Activated CD4-positive, alpha-beta T cell treated with anti-CD3 and anti-CD28 coated beads, Interleukin-2, amount 10 ng/mL, durations not matched to agents 24 days and 14 days (primary cell): ENCODE measurements at regions of chr2 and their contacts with region 1.

Region 1: GRCh38 chr2:246489-247144 is 17.2 kb downstream of the SH3YL1 start:
- DNase-seq: peak; percentile 80
- H3K4me3 Mint-ChIP-seq: no peak overlapping the region
- H3K27ac Mint-ChIP-seq: no peak overlapping the region
- H3K4me1 Mint-ChIP-seq: peaks cover 3% of the 10 kb centered on the region
- H3K27me3 Mint-ChIP-seq: no peaks in the 10 kb centered on the region

Region 2: GRCh38 chr2:264660-265468 is 18.2 kb after region 1 on chr2 and contains the start of gene ACP1:
- intact Hi-C with region 1: loop called (anchors 2 kb)
- DNase-seq: peak; percentile 99
- H3K4me3 Mint-ChIP-seq: peak within 1 kb of the TSS; percentile 97
- H3K27ac Mint-ChIP-seq: peak within 1 kb of the TSS; percentile 97
- H3K4me1 Mint-ChIP-seq: peaks cover 40% of the 10 kb centered on the region
- H3K27me3 Mint-ChIP-seq: no peaks in the 10 kb centered on the region
- total RNA-seq, gene ACP1: 124 and 127 TPM in 2 replicates

Region 3: DNA sequence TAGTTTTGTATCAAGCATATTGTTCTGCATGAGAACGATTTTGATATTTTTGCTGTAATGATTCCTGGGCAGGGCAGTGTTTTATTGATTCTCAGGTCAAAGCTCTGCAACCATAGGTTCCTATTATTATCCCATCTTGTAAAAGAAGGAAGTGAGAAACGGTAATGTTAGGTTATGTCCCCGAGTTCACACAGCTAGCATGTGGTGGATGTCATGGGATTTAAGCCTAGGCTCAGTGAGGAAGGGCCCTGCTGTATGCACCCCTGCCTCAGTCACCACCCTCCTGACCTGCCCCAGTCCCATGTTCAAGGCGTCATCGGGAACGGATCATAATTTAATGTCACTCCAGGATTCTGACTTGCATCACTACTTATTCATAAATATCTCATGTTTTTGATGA is 28.8 kb after region 1 on chr2:
- intact Hi-C with region 1: no loop called
- DNase-seq: no peak
- H3K4me3 Mint-ChIP-seq: no peak overlapping the region
- H3K27ac Mint-ChIP-seq: no peak overlapping the region
- H3K4me1 Mint-ChIP-seq: peaks cover 9% of the 10 kb centered on the region
- H3K27me3 Mint-ChIP-seq: no peaks in the 10 kb centered on the region

Region 4: DNA sequence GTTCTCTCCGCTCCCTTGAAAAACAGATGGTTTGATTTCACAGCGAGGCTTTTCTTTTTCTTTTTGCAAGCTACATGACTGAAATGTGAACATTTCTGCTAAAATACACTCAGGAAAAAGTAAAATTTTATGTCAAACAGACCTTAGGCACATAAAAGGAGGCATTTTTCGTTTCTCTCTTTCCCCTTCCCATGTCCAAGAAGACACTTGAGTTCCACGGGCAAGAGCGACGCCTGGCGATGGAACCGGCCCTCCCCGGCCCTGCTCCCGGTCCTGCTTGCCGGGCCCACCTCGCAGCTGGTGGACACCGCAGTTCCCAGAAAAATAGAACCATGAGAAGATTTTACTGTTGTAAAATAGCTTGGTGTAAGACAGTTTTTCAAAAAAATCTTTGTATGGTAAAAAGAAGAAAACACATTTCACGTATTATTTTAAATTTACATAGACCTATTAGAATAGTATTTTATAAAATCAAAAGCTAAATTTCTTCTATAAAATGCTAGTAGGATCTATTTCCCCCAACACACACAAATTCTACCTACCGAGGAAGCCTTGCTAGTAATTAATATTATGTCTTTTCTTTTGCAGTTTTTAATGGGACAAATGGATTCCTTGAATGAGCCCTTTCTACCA is 43.6 kb after region 1 on chr2:
- intact Hi-C with region 1: loop called (anchors 1 kb)
- DNase-seq: peak; percentile 80
- H3K4me3 Mint-ChIP-seq: peak overlapping the region; percentile 64
- H3K27ac Mint-ChIP-seq: no peak overlapping the region
- H3K4me1 Mint-ChIP-seq: peaks cover 4% of the 10 kb centered on the region
- H3K27me3 Mint-ChIP-seq: peaks cover 48% of the 10 kb centered on the region

Region 5: GRCh38 chr2:636641-637405 is 390.2 kb after region 1 on chr2:
- intact Hi-C with region 1: loop called (anchors 1 kb)
- DNase-seq: peak; percentile 83
- H3K4me3 Mint-ChIP-seq: peak overlapping the region; percentile 81
- H3K27ac Mint-ChIP-seq: peak overlapping the region; percentile 76
- H3K4me1 Mint-ChIP-seq: peaks cover 2% of the 10 kb centered on the region
- H3K27me3 Mint-ChIP-seq: peaks cover 13% of the 10 kb centered on the region